Right ventricle myocardium superior (tissue), 1 donor: ENCODE measurements at regions of chr19 and their contacts with region 1.

Region 1: GRCh38 chr19:29714953-29715700 is at the start of gene C19orf12:
- DNase-seq: peak; percentile 76
- ATAC-seq: peak; percentile 88
- total RNA-seq, gene C19orf12: 59.9 TPM

Region 2: GRCh38 chr19:29662604-29663404 is 52.3 kb before region 1 on chr19:
- intact Hi-C with region 1: loop called (anchors 5 kb)
- DNase-seq: peak; percentile 76
- ATAC-seq: peak; percentile 30

Region 3: DNA sequence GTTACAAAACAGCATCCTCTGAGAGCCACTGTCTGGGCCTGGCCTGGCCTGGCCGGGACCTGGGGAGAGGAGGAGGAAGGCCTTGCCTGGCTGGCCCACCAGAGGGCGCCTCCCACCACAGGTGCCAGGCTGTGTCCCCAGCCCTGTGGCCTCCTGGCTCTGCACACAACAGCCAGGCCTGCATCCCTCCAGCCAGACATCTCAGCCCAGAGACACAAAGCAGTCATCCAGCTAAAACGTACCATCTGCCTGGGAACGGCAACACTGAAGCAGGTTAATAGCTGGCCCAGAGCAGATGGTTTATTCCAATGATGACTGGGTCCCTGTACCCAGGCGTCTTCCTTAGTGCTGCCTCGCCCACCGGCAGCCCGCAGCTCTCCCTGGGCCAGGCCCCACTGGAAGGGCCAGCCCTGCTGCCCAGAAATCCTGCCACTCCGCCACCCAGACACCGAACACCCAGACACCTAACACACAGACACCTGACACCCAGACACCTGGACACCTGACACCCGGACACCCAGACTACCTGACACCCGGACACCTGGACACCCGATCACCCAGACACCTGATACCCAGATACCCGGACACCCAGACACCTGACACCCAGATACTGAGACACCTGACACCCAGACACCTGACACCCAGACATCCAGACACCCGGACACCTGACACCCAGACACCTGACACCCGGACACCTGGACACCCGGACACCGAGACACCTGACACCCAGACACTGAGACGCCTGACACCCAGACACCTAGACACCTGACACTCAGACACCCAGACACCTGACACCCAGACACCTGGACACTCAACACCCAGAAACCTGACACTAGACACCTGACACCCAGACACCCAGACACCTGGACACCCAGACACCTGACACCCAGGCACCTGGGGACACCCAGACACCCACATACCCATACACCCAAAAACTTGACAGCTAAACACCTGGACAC is 20.2 kb before region 1 on chr19:
- intact Hi-C with region 1: loop called (anchors 2 kb)
- DNase-seq: peak; percentile 89
- ATAC-seq: peak; percentile 97

Region 4: DNA sequence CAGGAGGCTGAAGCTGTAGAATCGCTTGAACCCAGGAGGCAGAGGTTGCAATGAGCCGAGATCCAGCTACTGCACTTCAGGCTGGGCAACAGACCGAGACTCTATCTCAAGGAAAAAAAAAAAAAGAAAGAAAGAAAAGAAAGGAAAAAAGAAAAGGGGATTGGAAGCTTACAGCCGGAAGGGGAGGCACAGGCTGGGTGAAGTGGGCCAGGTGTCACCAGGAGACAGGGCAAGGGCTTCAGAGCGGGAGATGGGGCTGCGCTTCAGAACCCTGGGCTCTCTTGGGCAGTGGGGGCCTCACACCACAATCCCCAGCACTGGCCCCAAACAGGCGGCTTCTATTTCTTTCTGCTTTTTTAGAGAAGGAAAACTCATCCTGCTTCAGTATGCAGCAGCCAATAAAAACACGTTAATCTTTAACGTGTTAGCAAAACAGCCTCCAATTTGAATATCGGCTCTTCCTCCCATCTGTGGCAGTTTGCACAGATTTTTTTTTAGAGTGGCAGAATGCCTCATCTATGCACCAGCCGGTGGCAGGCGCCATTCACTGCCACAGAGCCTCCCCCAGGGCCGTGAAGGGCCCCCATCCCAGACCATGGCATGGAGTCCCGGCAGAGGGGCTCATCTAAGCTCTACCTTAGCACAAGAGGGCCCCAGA is 46.6 kb after region 1 on chr19:
- intact Hi-C with region 1: no loop called
- DNase-seq: no peak
- ATAC-seq: no peak